ENCODE measurements at regions of chr17 and their contacts with region 1.

Region 1: DNA sequence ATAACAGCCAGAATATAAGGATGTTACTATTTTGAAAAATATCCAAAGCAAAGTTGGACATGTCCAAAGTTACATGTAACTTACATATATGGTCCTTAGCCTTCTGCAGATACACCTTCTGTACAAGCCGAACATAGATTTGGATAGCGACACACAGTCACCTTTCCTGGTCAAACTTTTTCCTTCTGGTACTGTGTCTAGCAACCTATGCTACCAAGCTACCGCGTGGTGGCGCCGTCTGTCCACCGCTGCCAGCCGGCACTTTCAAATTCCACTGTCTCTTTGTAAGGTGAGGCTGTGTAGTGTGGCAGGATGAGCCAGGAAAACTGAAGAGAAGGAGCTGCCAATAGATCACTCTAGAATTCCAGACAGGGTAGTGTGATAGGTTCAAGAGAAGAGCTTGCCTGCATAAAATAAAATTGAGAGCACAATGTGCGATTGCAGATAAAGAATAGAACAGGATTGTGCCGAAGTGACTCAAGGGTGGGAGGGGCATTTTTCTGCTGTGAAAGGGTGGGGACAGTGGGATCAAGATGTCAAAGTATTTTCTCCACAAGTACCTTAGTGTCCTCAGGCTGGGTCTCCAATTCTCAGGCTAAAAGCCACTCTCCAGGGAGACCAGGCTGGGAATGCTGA is 366.9 kb downstream of the SLC39A11 start:
- DNase-seq: peak; percentile 23 to 41
- ATAC-seq: peak in 7 of 8 donors; percentile 56 to 89 (median 73)
- H3K4me3 ChIP-seq: no peak overlapping the region
- H3K27ac ChIP-seq: no peak overlapping the region
- H3K4me1 ChIP-seq: peaks cover 0 to 8% (median 0%) of the 10 kb centered on the region in 9 donors
- H3K27me3 ChIP-seq: no peaks in the 10 kb centered on the region
- CTCF ChIP-seq: peak; percentile 47 to 91 (median 85)

Region 2: GRCh38 chr17:72677714-72678390 is 47.7 kb before region 1 on chr17:
- intact Hi-C with region 1: loop called in 1 of 10 experiments (anchors 5 kb)
- DNase-seq: no peak
- ATAC-seq: no peak
- H3K4me3 ChIP-seq: no peak overlapping the region
- H3K27ac ChIP-seq: no peak overlapping the region
- H3K4me1 ChIP-seq: no peaks in the 10 kb centered on the region
- H3K27me3 ChIP-seq: no peaks in the 10 kb centered on the region
- CTCF ChIP-seq: no peak

Region 3: GRCh38 chr17:72974605-72975232 is 249.2 kb after region 1 on chr17:
- intact Hi-C with region 1: no loop called
- DNase-seq: no peak
- ATAC-seq: no peak
- H3K4me3 ChIP-seq: no peak overlapping the region
- H3K27ac ChIP-seq: no peak overlapping the region
- H3K4me1 ChIP-seq: peaks cover 7 to 28% (median 23%) of the 10 kb centered on the region in 9 donors
- H3K27me3 ChIP-seq: no peaks in the 10 kb centered on the region
- CTCF ChIP-seq: no peak

Region 4: GRCh38 chr17:72985881-72986720 is 260.6 kb after region 1 on chr17:
- intact Hi-C with region 1: loop called in 1 of 10 experiments (anchors 10 kb)
- DNase-seq: peak; percentile 30 to 70
- ATAC-seq: peak in 7 of 8 donors; percentile 60 to 90 (median 77)
- H3K4me3 ChIP-seq: no peak overlapping the region
- H3K27ac ChIP-seq: no peak overlapping the region
- H3K4me1 ChIP-seq: peaks cover 0 to 9% (median 0%) of the 10 kb centered on the region in 9 donors
- H3K27me3 ChIP-seq: no peaks in the 10 kb centered on the region
- CTCF ChIP-seq: peak; percentile 59 to 89 (median 84)

Region 5: DNA sequence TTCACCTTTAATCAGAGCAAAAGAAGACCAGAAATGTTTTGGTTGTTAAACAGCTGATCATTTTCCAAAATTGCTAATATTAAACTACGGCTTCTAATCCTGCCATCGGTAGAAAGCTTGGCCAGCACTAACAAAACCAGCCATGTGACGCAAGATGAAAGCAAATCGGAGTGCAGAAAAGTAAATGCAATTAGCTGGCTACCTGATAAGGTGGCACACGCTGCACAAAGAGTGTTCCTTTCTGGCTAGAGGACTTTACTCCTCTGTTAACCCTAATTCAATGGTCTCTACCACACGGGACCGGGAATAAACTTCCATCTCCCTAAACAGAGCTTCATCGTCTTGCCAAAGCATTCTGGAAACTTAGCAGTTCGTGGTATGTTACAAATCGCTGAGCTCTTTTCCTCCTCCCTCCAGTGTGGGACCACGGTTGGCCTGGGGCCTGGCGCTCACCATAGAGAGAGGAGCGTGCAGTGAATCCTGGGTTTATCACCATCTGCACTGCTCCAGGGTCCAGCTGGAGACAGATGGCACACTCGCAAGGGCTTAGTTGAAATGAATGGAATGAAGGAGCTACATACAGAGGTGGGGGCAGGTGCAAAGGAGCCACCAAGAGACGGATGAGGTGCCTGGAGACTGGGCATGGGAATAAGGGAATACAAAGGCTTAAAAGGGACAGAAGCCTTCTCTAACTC is 457.2 kb after region 1 on chr17:
- intact Hi-C with region 1: loop called in 6 of 10 experiments (anchors 2 to 10 kb)
- DNase-seq: no peak
- ATAC-seq: peak in 1 of 8 donors; percentile 29
- H3K4me3 ChIP-seq: no peak overlapping the region
- H3K27ac ChIP-seq: no peak overlapping the region
- H3K4me1 ChIP-seq: peaks cover 0 to 4% (median 0%) of the 10 kb centered on the region in 9 donors
- H3K27me3 ChIP-seq: no peaks in the 10 kb centered on the region
- CTCF ChIP-seq: no peak

Region 6: GRCh38 chr17:73231841-73232586 is 506.5 kb after region 1 on chr17:
- intact Hi-C with region 1: loop called in 1 of 10 experiments (anchors 5 kb)
- DNase-seq: peak; percentile 97 to 98
- ATAC-seq: peak; percentile 96 to 98 (median 98)
- H3K4me3 ChIP-seq: peak overlapping the region; percentile 83 to 100 (median 94)
- H3K27ac ChIP-seq: peak overlapping the region; percentile 5 to 97 (median 90)
- H3K4me1 ChIP-seq: peaks cover 0 to 66% (median 48%) of the 10 kb centered on the region in 9 donors
- H3K27me3 ChIP-seq: no peaks in the 10 kb centered on the region
- CTCF ChIP-seq: peak in 8 of 9 donors; percentile 34 to 69 (median 55)

Region 7: DNA sequence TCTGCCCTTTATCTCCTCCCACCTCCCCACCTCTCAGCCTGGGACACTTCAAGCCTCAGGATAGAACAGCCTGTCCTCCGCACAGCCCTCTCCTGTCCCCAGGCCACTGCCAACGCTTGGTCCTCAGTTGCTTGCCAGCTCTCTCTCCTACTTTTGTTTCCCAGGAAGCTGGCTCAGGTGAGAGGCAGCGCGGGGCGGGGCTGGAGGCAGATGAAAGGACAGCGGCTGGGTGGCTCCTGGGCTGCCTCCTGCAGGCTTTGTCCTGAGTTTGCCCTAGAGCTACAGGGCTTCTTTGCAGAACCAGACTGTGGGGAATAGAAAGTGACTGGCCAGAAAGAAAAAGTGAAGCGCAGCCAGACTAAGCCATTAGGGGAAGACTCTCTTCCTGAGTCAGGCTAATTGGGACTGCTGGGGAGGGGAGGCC is 634.4 kb after region 1 on chr17:
- intact Hi-C with region 1: loop called in 3 of 10 experiments (anchors 5 to 10 kb)
- DNase-seq: peak in 1 of 2 donors; percentile 64
- ATAC-seq: peak in 6 of 8 donors; percentile 21 to 78 (median 56)
- H3K4me3 ChIP-seq: no peak overlapping the region
- H3K27ac ChIP-seq: peak overlapping the region in 1 of 10 donors; percentile 34
- H3K4me1 ChIP-seq: peaks cover 4 to 43% (median 28%) of the 10 kb centered on the region in 9 donors
- H3K27me3 ChIP-seq: no peaks in the 10 kb centered on the region
- CTCF ChIP-seq: peak in 3 of 9 donors; percentile 17 to 23 (median 17)

Region 8: GRCh38 chr17:73371285-73371684 is 645.7 kb after region 1 on chr17:
- intact Hi-C with region 1: loop called in 7 of 10 experiments (anchors 5 to 10 kb)
- DNase-seq: no peak
- ATAC-seq: no peak
- H3K4me3 ChIP-seq: no peak overlapping the region
- H3K27ac ChIP-seq: no peak overlapping the region
- H3K4me1 ChIP-seq: peaks cover 0 to 16% (median 12%) of the 10 kb centered on the region in 9 donors
- H3K27me3 ChIP-seq: no peaks in the 10 kb centered on the region
- CTCF ChIP-seq: no peak